ENCODE measurements at regions of chr2 and their contacts with region 1.

Region 1: GRCh38 chr2:131801210-131801744 is 273.6 kb downstream of the CCDC74A start:
- DNase-seq: no peak
- ATAC-seq: no peak
- H3K4me3 Mint-ChIP-seq: no peak overlapping the region
- H3K27ac Mint-ChIP-seq: no peak overlapping the region
- H3K4me1 Mint-ChIP-seq: no peaks in the 10 kb centered on the region
- H3K27me3 Mint-ChIP-seq: peaks cover 8% of the 10 kb centered on the region

Region 2: GRCh38 chr2:131673392-131674173 is 127.7 kb before region 1 on chr2:
- CTCF ChIA-PET with region 1: interaction called, 3 read pairs
- POLR2A ChIA-PET with region 1: no interaction called
- intact Hi-C with region 1: loop called (anchors 1 to 5 kb)
- DNase-seq: peak; percentile 78
- ATAC-seq: peak; percentile 74
- H3K4me3 Mint-ChIP-seq: peak overlapping the region; percentile 19
- H3K27ac Mint-ChIP-seq: no peak overlapping the region
- H3K4me1 Mint-ChIP-seq: peaks cover 2% of the 10 kb centered on the region
- H3K27me3 Mint-ChIP-seq: peaks cover 24% of the 10 kb centered on the region